K562 (cell line): ENCODE measurements at regions of chr4 and their contacts with region 1.

Region 1: DNA sequence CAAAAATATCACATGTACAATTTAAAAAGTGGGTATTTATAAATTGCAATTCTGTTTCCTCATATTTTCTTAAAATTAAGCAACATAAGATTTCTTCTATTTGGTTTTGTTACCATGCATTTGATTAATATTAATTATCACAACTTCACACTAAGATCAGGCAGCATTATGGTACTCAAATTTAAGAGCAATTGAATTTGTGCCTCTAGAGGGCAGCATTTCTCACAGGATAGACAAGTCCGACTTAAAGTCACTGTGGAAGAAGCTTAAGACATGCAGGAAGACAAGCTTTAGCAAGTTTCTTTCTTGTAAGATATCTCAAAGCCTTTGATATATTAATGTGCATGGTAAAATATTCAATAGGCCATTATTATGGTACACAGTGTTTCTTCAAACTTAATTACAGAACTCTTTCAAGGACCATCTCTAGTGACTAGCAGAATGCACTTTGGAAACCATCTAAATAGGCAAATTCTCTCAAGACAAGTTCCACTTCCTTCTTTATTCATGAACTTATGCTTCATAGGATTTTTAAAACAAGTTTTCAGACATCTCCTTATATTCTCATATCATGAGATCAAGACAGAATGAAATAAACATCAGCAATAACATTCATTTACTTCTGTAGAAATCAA is 35.0 kb downstream of the FBXW7 start:
- DNase-seq: peak; percentile 47 to 86 (median 56)
- ATAC-seq: peak; percentile 93
- H3K4me3 ChIP-seq: no peak overlapping the region
- H3K27ac ChIP-seq: no peak overlapping the region
- H3K4me1 ChIP-seq: peaks cover 0 to 8% of the 10 kb centered on the region in 2 experiments; a peak in 3 of 5 replicates
- H3K27me3 ChIP-seq: no peaks in the 10 kb centered on the region
- CTCF ChIP-seq: peak; percentile 44 to 82 (median 76)
- EP300 ChIP-seq: no peak
- POLR2A ChIP-seq: no peak
- RAD21 ChIP-seq: peak; percentile 80 to 86

Region 2: DNA sequence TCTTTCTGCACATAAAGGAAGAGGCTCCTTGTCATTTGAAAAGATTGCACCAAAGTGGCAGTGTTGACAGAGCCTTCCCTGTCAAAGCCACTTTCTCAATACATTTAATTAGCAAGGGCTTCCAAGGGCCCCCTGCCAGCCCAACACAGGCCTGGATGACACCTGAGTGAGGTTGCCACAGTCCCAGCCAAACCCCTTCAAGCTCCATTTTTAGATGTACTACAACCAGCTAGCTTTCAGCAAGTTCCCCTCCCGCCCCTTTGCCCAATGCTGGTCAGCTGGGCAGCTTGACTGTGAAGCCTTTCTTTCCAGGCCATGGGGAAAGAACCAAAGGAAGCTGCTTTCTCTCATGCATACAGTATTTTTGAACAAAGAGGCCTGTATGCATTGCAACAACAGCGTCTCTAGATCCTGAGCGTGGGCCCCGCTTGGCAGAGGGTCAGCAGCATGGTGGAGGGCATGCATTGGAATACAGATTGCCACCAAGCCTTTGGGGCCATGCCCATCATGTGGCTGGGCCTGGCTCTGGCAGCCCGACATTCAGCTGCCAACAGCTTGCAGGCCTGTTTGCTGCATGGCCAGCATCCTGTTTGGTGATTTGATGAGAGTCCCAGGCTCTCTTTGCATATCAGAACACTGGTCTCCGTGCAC is 479.0 kb before region 1 on chr4:
- CTCF ChIA-PET with region 1: no interaction called
- POLR2A ChIA-PET with region 1: no interaction called
- in situ Hi-C with region 1: no loop called
- intact Hi-C with region 1: no loop called
- DNase-seq: no peak
- ATAC-seq: no peak
- H3K4me3 ChIP-seq: no peak overlapping the region
- H3K27ac ChIP-seq: no peak overlapping the region
- H3K4me1 ChIP-seq: no peaks in the 10 kb centered on the region
- H3K27me3 ChIP-seq: peaks cover 2 to 15% of the 10 kb centered on the region in 2 experiments; a peak in 3 of 5 replicates
- CTCF ChIP-seq: no peak
- EP300 ChIP-seq: no peak
- POLR2A ChIP-seq: no peak
- RAD21 ChIP-seq: no peak

Region 3: GRCh38 chr4:152408514-152409327 is 92.2 kb before region 1 on chr4:
- CTCF ChIA-PET with region 1: no interaction called
- POLR2A ChIA-PET with region 1: no interaction called
- in situ Hi-C with region 1: no loop called
- intact Hi-C with region 1: loop called (anchors 5 kb)
- DNase-seq: peak; percentile 13 to 28 (median 18)
- ATAC-seq: peak; percentile 71
- H3K4me3 ChIP-seq: no peak overlapping the region
- H3K27ac ChIP-seq: no peak overlapping the region
- H3K4me1 ChIP-seq: no peaks in the 10 kb centered on the region
- H3K27me3 ChIP-seq: no peaks in the 10 kb centered on the region
- CTCF ChIP-seq: peak; percentile 29 to 68 (median 64); a peak in 5 of 6 replicates
- EP300 ChIP-seq: no peak
- POLR2A ChIP-seq: no peak
- RAD21 ChIP-seq: peak; percentile 61 to 63

Region 4: GRCh38 chr4:152460488-152460887 is 40.4 kb before region 1 on chr4:
- CTCF ChIA-PET with region 1: no interaction called
- POLR2A ChIA-PET with region 1: interaction called, 3 read pairs
- in situ Hi-C with region 1: no loop called
- intact Hi-C with region 1: loop called (anchors 5 kb)
- DNase-seq: peak in 1 of 4 experiments; percentile 15
- ATAC-seq: peak; percentile 60
- H3K4me3 ChIP-seq: no peak overlapping the region
- H3K27ac ChIP-seq: no peak overlapping the region
- H3K4me1 ChIP-seq: no peaks in the 10 kb centered on the region; a peak in 4 of 5 replicates
- H3K27me3 ChIP-seq: no peaks in the 10 kb centered on the region
- CTCF ChIP-seq: peak; percentile 7 to 55 (median 24); a peak in 2 of 6 replicates
- EP300 ChIP-seq: no peak
- POLR2A ChIP-seq: no peak
- RAD21 ChIP-seq: peak; percentile 75 to 80

Region 5: GRCh38 chr4:152581536-152582160 is 80.7 kb after region 1 on chr4:
- CTCF ChIA-PET with region 1: no interaction called
- POLR2A ChIA-PET with region 1: interaction called, 3 read pairs
- in situ Hi-C with region 1: no loop called
- intact Hi-C with region 1: loop called (anchors 5 kb)
- DNase-seq: peak in 2 of 4 experiments; percentile 22 to 45
- ATAC-seq: no peak
- H3K4me3 ChIP-seq: no peak overlapping the region
- H3K27ac ChIP-seq: no peak overlapping the region
- H3K4me1 ChIP-seq: peaks cover 0 to 10% of the 10 kb centered on the region in 2 experiments; a peak in 3 of 5 replicates
- H3K27me3 ChIP-seq: peaks cover 0 to 3% of the 10 kb centered on the region in 2 experiments; a peak in 3 of 5 replicates
- CTCF ChIP-seq: 0 out of 6 replicates have a peak, but pooled peaks of 1 of the 3 experiments have one; percentile 2
- EP300 ChIP-seq: no peak
- POLR2A ChIP-seq: no peak
- RAD21 ChIP-seq: 0 out of 4 replicates have a peak, but pooled peaks of 1 of the 2 experiments have one; percentile 23

Region 6: DNA sequence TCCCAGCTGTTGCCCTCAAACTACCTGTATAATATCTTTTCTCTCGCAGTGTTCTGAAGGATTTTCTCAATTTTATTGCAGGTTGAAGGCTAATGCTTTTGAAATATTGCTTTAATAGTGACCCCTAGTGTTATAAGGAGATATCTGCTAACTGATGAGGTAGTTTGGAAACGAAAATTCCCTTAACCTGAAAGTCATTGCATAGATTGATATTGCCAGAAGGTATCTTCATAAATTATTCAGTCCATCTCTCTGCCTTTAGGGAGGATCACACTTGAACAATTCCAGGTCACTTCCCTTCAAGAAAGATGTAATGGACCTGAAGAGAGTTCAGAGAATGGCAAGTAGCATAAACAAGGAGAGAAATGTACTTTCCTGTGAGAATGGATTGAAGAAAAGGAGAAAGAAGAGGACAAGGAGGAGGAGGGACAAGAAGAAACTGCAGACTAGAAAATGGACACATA is 234.5 kb after region 1 on chr4:
- CTCF ChIA-PET with region 1: interaction called, 6 read pairs
- POLR2A ChIA-PET with region 1: no interaction called
- in situ Hi-C with region 1: no loop called
- intact Hi-C with region 1: loop called (anchors 5 kb)
- DNase-seq: peak in 3 of 4 experiments; percentile 10 to 12 (median 11)
- ATAC-seq: peak; percentile 67
- H3K4me3 ChIP-seq: no peak overlapping the region
- H3K27ac ChIP-seq: no peak overlapping the region
- H3K4me1 ChIP-seq: no peaks in the 10 kb centered on the region
- H3K27me3 ChIP-seq: peaks cover 5 to 13% of the 10 kb centered on the region in 2 experiments; a peak in 3 of 5 replicates
- CTCF ChIP-seq: peak; percentile 23 to 68 (median 37); a peak in 4 of 6 replicates
- EP300 ChIP-seq: no peak
- POLR2A ChIP-seq: no peak
- RAD21 ChIP-seq: peak; percentile 79 to 80